Lower leg skin (tissue), 4 donors: ENCODE measurements at regions of chr11 and their contacts with region 1.

Region 1: DNA sequence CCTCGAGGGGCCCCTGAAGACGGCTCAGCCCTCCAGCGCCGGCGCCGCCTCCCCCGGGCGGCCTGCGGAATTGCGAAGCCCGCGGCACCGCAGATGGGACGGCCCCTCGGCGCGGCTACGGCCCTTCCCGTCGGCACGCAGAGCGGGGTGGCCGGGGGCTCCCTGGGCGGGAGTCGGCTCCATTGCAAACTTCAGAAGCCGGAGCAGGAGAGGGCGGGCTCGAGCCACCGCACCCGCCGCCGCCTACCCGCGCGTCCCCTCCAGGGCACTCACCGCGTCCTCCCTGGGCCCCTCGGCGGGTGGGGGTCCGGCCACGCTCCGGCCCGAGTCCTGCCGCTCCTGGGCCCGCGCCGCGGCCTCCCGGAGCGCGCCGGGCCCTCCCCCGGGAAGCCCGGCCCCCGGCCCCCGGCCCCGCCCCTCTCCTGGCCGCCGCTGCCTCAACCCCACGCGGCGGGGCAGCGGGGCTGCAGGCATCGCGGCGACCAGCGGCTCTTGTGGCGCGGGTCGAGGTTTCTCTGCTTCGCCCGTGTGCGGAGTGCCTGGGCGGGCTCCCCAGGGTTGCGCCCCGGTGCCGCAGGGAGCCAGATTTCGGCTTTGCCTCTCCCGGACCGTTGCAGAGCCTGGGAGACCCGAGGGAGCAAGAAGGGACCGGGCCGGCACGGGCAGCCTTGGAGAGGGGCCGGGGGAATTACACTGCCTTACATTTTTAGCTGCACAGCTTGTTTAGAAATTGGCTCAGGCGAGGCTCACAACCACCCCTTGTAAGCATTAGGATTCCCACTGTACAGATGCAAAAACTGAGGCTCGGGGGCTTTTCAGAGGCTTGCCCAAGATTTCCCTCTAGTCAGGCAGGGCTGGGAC is at the start of gene PACSIN3:
- DNase-seq: no peak
- H3K4me3 ChIP-seq: peak within 1 kb of the TSS; percentile 53
- CTCF ChIP-seq: no peak
- POLR2A ChIP-seq: no peak
- total RNA-seq, gene PACSIN3: 47.7 to 73.5 (median 58.4) TPM

Region 2: DNA sequence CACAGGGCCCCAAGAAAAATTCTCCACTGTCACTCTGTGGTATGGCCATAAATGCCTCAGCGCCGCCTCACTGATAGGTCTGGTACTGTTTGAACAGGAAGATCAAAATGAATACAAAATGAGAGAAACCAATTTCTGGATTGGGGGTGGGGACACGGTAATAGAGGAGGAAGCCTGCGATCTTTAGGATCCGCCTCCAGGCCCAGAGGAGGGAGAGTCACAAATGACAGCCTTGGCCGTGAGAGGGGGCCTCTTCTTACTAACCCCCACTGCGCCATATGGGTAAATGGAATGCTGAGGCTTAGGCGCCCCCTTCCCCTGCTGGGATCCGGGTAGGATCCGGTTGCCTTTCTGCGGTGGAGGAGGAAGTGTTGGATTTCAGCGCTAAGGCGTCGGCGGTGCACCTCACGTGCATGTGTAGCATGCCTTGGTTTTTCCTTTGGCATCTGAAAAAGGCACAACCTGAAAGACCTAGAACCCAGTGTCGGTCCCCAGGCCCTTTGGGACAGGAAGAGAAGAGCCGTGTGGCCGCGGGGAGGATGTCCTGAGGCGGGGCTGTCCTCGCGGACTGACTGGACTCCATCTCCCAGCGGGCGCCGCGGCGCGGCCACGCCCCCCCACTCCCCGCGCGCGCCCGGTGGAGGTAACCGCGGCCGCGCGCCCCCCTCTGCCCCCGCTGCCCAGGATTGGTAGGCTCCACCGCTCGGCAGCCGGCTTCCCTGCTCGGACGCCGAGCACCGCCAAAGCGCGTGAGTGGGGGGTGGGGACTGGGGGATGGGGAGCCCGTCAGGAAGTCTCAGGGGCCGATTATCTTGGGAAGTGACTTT is 82.9 kb after region 1 on chr11:
- intact Hi-C with region 1: loop called (anchors 5 kb)
- DNase-seq: peak; percentile 85 to 97
- H3K4me3 ChIP-seq: peak overlapping the region; percentile 72
- CTCF ChIP-seq: no peak
- POLR2A ChIP-seq: no peak

Region 3: DNA sequence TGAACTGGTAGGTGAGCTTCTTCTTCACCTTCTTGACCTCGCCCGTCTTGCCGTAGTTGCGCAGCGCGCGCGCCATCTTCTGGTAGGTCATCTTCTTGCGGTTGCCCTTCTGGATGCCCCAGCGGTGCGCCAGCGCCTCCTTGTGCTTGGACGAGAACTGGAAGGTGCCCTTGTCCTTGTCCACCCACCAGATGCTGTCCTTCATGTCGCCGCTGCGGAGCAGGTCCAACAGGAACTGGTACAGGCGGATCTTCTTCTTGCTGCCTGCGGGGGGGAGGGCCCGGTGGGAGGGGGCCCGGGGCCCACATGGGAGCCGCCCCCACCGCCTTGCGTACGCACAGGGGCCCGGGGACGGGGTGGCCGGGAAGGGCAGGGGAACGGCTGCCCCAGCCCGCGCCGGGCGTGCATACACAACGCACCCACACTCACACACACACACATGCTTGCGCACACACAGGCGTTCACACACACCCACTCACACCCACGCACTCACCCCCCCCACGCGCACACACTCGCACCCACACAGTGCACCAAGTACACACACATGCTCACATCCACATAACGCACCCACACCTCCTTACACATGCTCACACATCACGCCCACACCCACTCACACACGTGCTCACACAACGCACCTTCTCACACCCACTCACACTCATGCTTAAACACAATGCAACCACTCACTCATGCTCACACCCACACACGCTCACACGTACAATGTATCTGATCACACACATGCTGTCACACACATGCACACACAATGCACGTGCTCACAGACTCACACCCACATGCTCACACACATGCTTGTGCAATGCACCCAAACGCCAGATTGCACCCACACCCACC is 169.2 kb after region 1 on chr11:
- intact Hi-C with region 1: loop called (anchors 10 kb)
- DNase-seq: peak; percentile 91 to 98
- H3K4me3 ChIP-seq: no peak overlapping the region
- CTCF ChIP-seq: peak in 1 of 3 donors; percentile 79
- POLR2A ChIP-seq: no peak